ENCODE measurements at regions of chr10 and their contacts with region 1.

Region 1: GRCh38 chr10:5977471-5978229 is at the start of gene IL15RA:
- DNase-seq: peak; percentile 88
- H3K4me3 Mint-ChIP-seq: peak within 1 kb of the TSS; percentile 95
- H3K27ac Mint-ChIP-seq: peak within 1 kb of the TSS; percentile 95
- H3K4me1 Mint-ChIP-seq: peaks cover 20% of the 10 kb centered on the region
- H3K27me3 Mint-ChIP-seq: peaks cover 5% of the 10 kb centered on the region
- total RNA-seq, gene IL15RA: 19.2 and 19.8 TPM in 2 replicates

Region 2: GRCh38 chr10:5889624-5890451 is 87.8 kb before region 1 on chr10 and contains the starts of genes ANKRD16 and FBH1:
- intact Hi-C with region 1: loop called (anchors 5 kb)
- DNase-seq: peak; percentile 98
- H3K4me3 Mint-ChIP-seq: peak within 1 kb of the TSS; percentile 94
- H3K27ac Mint-ChIP-seq: peak within 1 kb of the TSS; percentile 79
- H3K4me1 Mint-ChIP-seq: peaks cover 41% of the 10 kb centered on the region
- H3K27me3 Mint-ChIP-seq: no peaks in the 10 kb centered on the region
- total RNA-seq, gene ANKRD16: 10.4 and 11.6 TPM in 2 replicates
- total RNA-seq, gene FBH1: 57.2 and 58.0 TPM in 2 replicates

Region 3: DNA sequence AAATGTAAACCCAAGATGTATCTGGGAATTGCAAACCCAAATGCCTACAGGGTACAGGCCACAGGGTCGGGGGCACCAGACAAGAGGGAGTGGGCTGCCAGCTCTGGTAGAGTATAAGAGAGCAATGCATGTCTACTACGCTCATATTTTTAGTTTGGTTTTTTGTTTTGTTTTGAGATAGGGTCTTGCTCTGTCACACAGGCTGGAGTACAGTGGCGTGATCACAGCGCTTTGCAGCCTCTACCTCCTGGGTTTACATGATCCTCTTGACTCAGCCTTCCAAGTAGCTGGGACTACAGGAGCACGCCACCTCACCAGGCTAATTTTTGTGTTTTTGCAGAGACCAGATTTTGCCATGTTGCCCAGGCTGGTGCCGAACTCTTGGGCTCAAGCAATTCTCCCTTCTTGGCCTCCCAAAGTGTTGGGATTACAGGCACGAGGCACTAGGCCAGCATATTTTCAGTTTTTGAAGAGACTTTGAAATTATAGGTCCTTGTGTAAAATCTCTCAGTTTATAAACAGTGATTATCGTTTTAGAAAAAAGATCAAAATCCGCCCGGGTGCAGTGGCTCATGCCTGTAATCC is 10.8 kb after region 1 on chr10:
- intact Hi-C with region 1: no loop called
- DNase-seq: no peak
- H3K4me3 Mint-ChIP-seq: no peak overlapping the region
- H3K27ac Mint-ChIP-seq: peak overlapping the region; percentile 54
- H3K4me1 Mint-ChIP-seq: peaks cover 14% of the 10 kb centered on the region
- H3K27me3 Mint-ChIP-seq: peaks cover 9% of the 10 kb centered on the region

Region 4: GRCh38 chr10:6002809-6003510 is 25.3 kb after region 1 on chr10:
- intact Hi-C with region 1: loop called (anchors 1 kb)
- DNase-seq: no peak
- H3K4me3 Mint-ChIP-seq: peak overlapping the region; percentile 28
- H3K27ac Mint-ChIP-seq: peak overlapping the region; percentile 85
- H3K4me1 Mint-ChIP-seq: peaks cover 48% of the 10 kb centered on the region
- H3K27me3 Mint-ChIP-seq: peaks cover 6% of the 10 kb centered on the region

Region 5: DNA sequence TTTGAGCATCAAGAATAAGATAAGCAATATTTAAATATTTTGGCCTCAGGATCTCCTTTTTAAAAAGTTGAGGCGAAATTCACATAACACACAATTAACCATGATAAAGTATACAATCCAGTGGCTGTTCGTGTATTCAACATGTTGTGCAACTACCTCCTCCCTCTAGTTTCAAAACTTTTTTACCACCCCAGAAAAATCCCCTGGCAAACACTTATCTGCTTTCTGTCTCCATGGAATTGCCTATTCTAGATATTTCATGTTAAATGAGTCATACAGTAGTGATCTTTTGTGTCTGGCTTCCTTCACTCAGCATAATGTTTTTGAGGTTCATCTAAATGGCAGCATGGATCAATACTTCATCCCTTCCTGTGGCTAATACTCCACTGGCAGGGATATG is 31.5 kb after region 1 on chr10:
- intact Hi-C with region 1: loop called (anchors 2 kb)
- DNase-seq: no peak
- H3K4me3 Mint-ChIP-seq: no peak overlapping the region
- H3K27ac Mint-ChIP-seq: peak overlapping the region; percentile 43
- H3K4me1 Mint-ChIP-seq: peaks cover 48% of the 10 kb centered on the region
- H3K27me3 Mint-ChIP-seq: no peaks in the 10 kb centered on the region

Region 6: DNA sequence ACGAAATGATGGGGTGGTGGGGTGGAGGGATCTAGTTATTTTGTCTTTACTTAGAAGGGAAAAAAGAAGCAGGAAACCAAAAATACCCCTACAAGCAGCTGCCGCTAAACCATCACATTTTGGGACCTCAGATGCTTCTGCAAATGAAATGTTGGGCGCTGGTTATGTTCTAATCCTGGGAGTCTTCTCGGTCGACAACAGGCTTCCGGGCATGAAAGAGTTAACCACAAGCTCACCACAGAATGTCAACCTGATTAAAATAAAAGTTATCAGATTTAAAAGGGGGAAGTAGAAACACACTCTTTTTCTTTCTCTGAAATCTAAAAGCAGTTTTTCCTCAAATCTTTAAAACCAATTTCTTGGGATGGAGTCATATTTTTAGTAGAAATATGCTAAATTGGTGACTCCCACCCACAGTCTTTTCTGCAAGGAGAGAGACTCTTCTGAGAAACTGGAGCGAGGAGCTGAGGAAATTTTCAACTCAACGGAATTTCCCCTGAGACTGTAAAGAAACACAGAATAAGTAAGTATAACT is 67.7 kb after region 1 on chr10:
- intact Hi-C with region 1: loop called (anchors 2 kb)
- DNase-seq: peak; percentile 54
- H3K4me3 Mint-ChIP-seq: peak overlapping the region; percentile 69
- H3K27ac Mint-ChIP-seq: peak overlapping the region; percentile 94
- H3K4me1 Mint-ChIP-seq: peaks cover 81% of the 10 kb centered on the region
- H3K27me3 Mint-ChIP-seq: no peaks in the 10 kb centered on the region